ENCODE measurements at regions of chr9 and their contacts with region 1.

Region 1: DNA sequence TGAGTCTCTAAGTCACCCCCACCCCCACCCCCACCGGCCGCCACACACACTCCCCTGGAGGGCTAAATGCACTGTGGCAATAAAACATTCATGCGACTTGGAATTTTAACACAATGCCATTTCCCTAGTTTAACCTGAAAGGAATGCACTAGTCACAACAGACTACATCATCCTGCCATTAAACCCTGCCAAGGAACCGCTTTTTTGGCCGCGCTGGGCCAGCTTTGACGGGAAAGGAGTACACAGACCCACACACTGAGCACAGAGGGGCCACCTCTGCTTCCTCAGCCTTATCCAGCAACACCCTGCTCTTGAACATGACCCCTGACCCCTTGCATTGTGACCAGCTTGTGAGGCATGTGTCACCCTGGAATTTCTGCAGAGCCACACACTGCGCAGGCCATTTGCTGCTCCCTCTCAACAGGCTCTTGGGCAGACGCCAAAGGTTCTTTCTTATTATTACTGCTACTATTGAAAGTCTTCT is 165.3 kb downstream of the BNC2 start:
- DNase-seq: peak; percentile 91
- H3K4me3 ChIP-seq: peak overlapping the region; percentile 34
- CTCF ChIP-seq: no peak

Region 2: DNA sequence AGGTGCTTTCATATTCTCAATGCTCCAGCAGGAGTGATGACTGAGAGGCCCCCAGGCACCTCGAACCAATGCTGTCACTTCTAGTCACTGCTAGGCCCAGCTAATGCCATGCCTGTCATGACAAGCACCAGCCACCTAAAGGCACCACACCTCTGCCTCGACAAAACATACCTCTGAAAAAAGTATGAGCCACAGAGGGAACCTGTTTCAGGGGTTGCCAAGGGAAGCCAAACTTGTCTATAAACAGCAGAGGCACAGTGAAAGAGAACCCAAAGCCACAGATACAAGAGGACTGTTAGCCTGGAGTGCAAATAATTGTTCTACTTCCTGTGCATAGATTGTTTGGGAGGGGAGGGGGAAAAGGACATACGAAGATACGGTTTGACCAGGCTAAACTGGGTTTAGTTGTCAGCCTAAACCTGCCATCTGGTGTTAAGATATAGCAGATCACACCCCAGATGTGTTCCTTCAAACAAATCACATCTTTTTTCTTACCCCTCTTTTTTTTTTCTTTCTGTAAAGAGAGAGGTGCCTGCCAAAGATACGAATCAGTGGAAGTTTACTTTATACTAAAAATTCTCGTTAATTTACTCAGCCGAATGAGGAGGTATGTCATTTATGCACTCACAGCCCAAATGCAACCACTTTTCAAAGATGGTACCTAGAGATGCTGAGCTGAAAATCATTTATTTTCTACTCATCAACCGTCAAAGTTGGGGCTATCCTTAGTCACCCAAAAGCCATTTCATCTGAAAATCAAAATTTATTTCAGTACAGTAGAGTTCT is 119.6 kb after region 1 on chr9:
- CTCF ChIA-PET with region 1: interaction called, 3 read pairs
- POLR2A ChIA-PET with region 1: interaction called, 10 read pairs
- DNase-seq: no peak
- H3K4me3 ChIP-seq: no peak overlapping the region
- CTCF ChIP-seq: no peak

Measured in AG04449 (cell line).